ENCODE measurements at regions of chr15 and their contacts with region 1.

Region 1: DNA sequence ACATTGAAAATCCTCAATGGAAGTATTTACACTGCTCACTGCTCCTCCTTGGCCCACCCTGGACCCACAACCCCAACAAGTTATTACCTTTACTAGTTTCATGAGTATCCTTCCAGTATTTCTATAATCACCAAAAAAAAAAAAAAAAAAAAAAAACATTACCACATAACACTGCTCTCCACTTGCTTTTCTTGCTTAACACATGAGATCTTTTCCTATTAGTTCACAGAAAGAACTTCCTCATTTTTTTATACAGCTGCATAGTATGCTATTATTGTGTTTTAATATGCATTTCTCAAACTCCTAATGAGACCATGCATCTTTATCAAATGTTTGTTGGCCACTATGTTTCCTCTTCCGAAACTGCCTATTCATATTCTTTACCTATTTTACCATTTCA is 14.6 kb downstream of the GABPB1 start:
- DNase-seq: peak in 1 of 3 donors; percentile 54
- H3K4me3 ChIP-seq: no peak overlapping the region
- H3K27ac ChIP-seq: no peak overlapping the region
- H3K4me1 ChIP-seq: peaks cover 0 to 20% (median 8%) of the 10 kb centered on the region in 4 experiments
- H3K27me3 ChIP-seq: no peaks in the 10 kb centered on the region

Region 2: DNA sequence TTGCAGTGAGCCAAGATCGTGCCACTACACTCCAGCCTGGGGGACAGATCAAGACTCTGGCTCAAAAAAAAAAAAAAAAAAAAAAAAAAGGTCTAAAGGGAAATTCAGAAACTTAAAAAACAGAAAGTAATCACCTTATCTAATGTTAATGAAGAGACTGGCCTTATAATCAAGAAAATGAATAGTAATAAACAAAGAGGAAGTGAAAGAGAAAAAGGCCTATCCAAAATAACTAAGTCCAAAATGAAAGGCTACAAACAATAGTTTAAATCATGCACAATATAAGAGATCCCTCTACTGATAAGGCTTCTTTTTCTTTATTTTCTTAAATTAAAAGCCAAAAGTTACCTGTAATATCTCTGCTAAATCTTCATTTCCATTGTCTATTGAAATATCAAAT is 37.8 kb before region 1 on chr15:
- CTCF ChIA-PET with region 1: no interaction called
- POLR2A ChIA-PET with region 1: no interaction called
- DNase-seq: no peak
- H3K4me3 ChIP-seq: no peak overlapping the region
- H3K27ac ChIP-seq: no peak overlapping the region
- H3K4me1 ChIP-seq: no peaks in the 10 kb centered on the region
- H3K27me3 ChIP-seq: no peaks in the 10 kb centered on the region

Region 3: DNA sequence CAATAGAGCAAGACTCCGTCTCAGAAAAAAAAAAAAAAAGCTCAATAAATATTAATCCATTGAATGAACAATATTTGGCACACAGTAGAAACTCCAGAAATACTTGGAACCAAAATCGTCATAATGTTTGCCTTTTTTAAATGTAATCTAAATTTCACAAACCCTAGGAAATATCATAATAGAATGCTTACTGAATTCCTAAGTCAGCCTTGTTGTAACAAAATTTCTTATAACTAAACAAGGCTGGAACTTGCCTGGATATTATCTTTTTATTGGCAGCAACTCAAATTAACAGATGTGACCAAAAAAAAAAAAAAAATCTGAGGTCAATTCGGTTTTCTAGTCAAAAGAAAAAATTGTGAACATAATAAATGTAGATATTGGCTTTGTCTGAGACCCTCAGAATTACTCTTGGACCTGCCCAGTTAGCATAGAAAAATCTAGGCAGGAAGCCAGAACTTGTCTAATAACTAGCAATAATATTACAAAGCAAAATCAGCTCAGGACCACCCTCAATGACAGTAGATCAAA is 18.7 kb before region 1 on chr15:
- CTCF ChIA-PET with region 1: interaction called, 16 read pairs
- POLR2A ChIA-PET with region 1: no interaction called
- DNase-seq: no peak
- H3K4me3 ChIP-seq: no peak overlapping the region
- H3K27ac ChIP-seq: no peak overlapping the region
- H3K4me1 ChIP-seq: peaks cover 8 to 16% (median 11%) of the 10 kb centered on the region in 4 experiments
- H3K27me3 ChIP-seq: no peaks in the 10 kb centered on the region

Region 4: DNA sequence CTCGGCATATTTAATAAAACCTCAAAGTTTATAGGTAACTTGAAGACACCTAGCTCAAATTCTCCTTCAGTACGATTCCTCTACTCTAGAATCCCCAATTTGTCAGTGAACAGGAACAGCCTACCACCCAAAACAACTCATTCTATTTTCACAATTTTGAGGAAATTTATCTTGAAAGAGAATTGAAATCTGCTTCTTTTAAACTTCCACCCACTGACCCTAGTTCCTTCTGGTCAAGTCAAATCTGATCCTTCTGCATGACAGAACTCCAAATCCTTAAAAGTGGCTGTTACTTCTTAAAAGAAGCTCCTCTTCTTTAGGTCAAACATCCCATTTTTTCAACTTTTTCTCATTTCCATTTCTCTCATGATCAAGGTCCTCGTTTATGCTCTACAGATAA is 10.2 kb after region 1 on chr15:
- CTCF ChIA-PET with region 1: interaction called, 28 read pairs
- POLR2A ChIA-PET with region 1: interaction called, 7 read pairs
- DNase-seq: no peak
- H3K4me3 ChIP-seq: peak overlapping the region in 5 of 7 experiments; percentile 5 to 97 (median 67)
- H3K27ac ChIP-seq: peak overlapping the region; percentile 38 to 96
- H3K4me1 ChIP-seq: peaks cover 30 to 52% (median 36%) of the 10 kb centered on the region in 4 experiments
- H3K27me3 ChIP-seq: no peaks in the 10 kb centered on the region

Region 5: DNA sequence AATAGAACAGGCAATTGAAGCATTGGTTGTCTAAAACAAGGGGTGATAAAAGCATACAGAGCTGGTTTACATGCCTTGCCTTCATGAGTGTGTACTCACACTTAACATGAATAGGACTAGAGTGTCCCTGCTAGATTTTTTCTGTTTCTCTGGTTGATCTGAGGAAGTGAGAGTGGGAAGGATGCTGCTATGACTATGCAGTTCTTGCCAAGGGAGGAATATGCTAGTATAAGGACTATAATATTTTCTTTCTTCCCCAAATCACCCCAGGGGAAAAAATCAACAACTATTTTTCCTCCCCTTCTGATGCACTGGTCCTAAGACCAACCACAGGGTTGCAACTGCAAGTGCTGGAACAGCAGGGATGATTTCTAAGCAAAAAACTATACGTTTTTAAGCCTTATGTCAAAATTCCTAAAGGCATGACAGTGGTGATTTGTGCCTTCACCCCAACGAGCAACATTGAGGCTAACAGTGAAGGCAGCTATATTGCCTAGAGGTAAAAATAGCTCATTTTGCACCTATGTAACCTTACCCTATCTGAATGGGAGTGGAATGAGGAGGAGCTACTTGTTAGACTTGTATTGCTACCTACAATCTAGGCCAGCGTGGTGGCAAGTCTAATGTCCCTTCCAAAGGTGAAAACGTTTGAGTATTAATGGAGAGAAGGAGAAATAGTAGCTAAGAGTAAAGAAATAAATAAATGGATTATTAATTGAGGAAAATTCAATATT is 50.3 kb after region 1 on chr15:
- CTCF ChIA-PET with region 1: no interaction called
- POLR2A ChIA-PET with region 1: no interaction called
- DNase-seq: peak; percentile 15 to 72 (median 65)
- H3K4me3 ChIP-seq: no peak overlapping the region
- H3K27ac ChIP-seq: no peak overlapping the region
- H3K4me1 ChIP-seq: peaks cover 0 to 13% (median 5%) of the 10 kb centered on the region in 4 experiments
- H3K27me3 ChIP-seq: no peaks in the 10 kb centered on the region

Measured in common myeloid progenitor, CD34-positive (primary cell).